ENCODE measurements at regions of chr2 and their contacts with region 1.

Region 1: DNA sequence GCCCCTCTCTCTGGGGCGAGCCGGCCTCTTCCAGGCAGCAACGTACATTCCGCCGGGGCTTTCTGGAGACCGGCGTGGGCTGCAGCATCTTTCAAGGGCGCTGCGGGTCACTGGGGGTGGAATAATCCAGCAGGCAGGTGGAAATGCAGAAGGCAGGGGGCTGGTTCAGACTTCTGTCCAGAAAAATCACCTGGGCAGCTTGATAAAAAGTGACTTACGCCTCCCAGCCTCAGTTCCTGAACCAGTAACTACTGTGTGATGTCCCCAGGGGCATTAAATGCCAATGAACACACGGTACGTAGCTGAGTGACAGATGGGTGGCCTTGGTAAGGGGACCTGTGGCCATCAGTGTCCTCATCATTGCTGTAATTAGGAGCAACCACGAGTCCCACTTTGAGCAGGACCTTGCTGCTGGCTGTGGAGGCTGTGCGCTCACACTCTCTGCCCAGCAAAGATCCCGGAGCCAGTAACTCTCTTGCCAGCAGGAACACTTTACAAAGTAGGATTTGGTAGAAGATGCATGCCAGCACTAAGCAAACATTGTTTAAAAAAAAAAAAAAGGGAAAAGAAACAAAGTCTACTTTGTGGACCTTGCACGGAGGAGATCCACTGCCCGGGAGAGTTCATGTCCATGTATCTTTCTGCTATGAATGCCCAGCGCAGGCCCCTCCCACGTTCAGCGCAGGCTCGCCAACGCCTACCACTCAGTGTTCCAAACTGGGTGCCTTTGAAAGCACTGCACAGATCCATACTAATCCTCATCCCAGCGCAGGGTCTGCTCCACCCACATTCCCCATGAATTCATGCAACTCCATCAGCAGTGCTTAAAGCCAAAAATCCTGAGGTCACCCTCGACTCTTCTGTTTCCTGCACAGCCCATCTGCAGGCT is 177.3 kb downstream of the HDAC4 start:
- DNase-seq: peak; percentile 52 to 84 (median 70)
- ATAC-seq: peak; percentile 51 to 65
- H3K4me3 ChIP-seq: no peak overlapping the region
- H3K27ac ChIP-seq: peak overlapping the region; percentile 68
- H3K4me1 ChIP-seq: peaks cover 24% of the 10 kb centered on the region
- H3K27me3 ChIP-seq: no peaks in the 10 kb centered on the region

Region 2: GRCh38 chr2:239293775-239294430 is 70.3 kb after region 1 on chr2:
- intact Hi-C with region 1: loop called in 1 of 4 experiments (anchors 10 kb)
- DNase-seq: peak in 1 of 3 donors; percentile 12
- ATAC-seq: no peak
- H3K4me3 ChIP-seq: no peak overlapping the region
- H3K27ac ChIP-seq: no peak overlapping the region
- H3K4me1 ChIP-seq: peaks cover 28% of the 10 kb centered on the region
- H3K27me3 ChIP-seq: no peaks in the 10 kb centered on the region

Region 3: GRCh38 chr2:239318790-239319661 is 95.5 kb after region 1 on chr2:
- intact Hi-C with region 1: loop called in 1 of 4 experiments (anchors 10 kb)
- DNase-seq: peak; percentile 56 to 71 (median 66)
- ATAC-seq: peak; percentile 46 to 64
- H3K4me3 ChIP-seq: peak overlapping the region; percentile 33
- H3K27ac ChIP-seq: peak overlapping the region; percentile 66
- H3K4me1 ChIP-seq: peaks cover 11% of the 10 kb centered on the region
- H3K27me3 ChIP-seq: no peaks in the 10 kb centered on the region

Region 4: GRCh38 chr2:239399111-239399920 is 175.8 kb after region 1 on chr2:
- intact Hi-C with region 1: loop called in 1 of 4 experiments (anchors 10 kb)
- DNase-seq: peak in 2 of 3 donors; percentile 37 to 74
- ATAC-seq: no peak
- H3K4me3 ChIP-seq: peak overlapping the region; percentile 98
- H3K27ac ChIP-seq: no peak overlapping the region
- H3K4me1 ChIP-seq: peaks cover 2% of the 10 kb centered on the region
- H3K27me3 ChIP-seq: no peaks in the 10 kb centered on the region

Region 5: GRCh38 chr2:239953418-239954061 is 730.0 kb after region 1 on chr2:
- intact Hi-C with region 1: loop called in 1 of 4 experiments (anchors 10 kb)
- DNase-seq: peak; percentile 53 to 68 (median 62)
- ATAC-seq: peak; percentile 67 to 72
- H3K4me3 ChIP-seq: no peak overlapping the region
- H3K27ac ChIP-seq: no peak overlapping the region
- H3K4me1 ChIP-seq: peaks cover 3% of the 10 kb centered on the region
- H3K27me3 ChIP-seq: no peaks in the 10 kb centered on the region